Sigmoid colon (tissue), 7 donors: ENCODE measurements at regions of chr17 and their contacts with region 1.

Region 1: DNA sequence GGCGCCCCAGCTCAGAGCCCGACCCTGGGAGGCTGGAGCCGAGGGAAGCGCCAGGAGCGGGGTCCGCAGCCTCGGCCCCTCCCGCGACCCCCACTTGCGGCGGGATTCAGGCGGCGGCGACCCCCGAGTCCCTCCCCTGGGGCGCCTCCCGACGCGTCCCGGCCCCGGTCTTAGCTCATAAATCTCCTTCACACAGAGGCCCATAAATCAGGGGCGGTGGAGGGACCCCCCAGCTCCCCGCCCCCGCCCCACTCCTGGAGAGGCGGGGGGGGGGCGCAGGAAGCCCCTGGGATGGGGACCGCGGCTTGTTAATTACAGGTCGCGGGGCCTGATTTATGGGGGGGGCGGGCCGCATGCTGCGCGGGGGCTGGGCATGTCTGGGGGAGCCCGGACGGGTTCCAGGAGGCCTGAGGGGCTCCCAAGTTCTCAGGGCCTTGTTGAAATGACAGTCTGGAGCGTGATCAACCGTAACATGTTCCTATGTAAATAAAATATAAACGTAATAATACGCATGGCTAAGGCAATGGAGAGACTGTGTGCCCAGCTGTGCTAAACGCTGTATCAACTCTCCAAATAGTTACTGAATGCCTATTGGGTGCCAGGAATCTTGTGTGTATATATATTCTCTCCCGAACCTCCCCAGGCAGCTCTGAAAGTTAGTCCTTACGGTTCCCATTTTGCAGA is 10.0 kb upstream of the BHLHA9 start:
- DNase-seq: no peak
- H3K4me3 ChIP-seq: peak overlapping the region; percentile 38 to 59 (median 52)
- H3K27ac ChIP-seq: peak overlapping the region; percentile 66 to 84 (median 80)
- H3K4me1 ChIP-seq: peaks cover 0 to 15% (median 9%) of the 10 kb centered on the region in 4 donors
- H3K27me3 ChIP-seq: no peaks in the 10 kb centered on the region
- CTCF ChIP-seq: no peak
- EP300 ChIP-seq: no peak
- POLR2A ChIP-seq: no peak

Region 2: GRCh38 chr17:1229432-1229899 is 30.8 kb before region 1 on chr17:
- intact Hi-C with region 1: no loop called
- DNase-seq: peak; percentile 82
- H3K4me3 ChIP-seq: peak overlapping the region; percentile 26 to 59 (median 49)
- H3K27ac ChIP-seq: peak overlapping the region; percentile 38 to 62 (median 53)
- H3K4me1 ChIP-seq: peaks cover 0 to 26% (median 24%) of the 10 kb centered on the region in 4 donors
- H3K27me3 ChIP-seq: peaks cover 22 to 73% (median 58%) of the 10 kb centered on the region in 3 donors
- CTCF ChIP-seq: no peak
- EP300 ChIP-seq: no peak
- POLR2A ChIP-seq: peak in 1 of 2 donors; percentile 53

Region 3: GRCh38 chr17:1275962-1276736 is 15.9 kb after region 1 on chr17:
- intact Hi-C with region 1: loop called (anchors 1 kb)
- DNase-seq: peak; percentile 79
- H3K4me3 ChIP-seq: no peak overlapping the region
- H3K27ac ChIP-seq: no peak overlapping the region
- H3K4me1 ChIP-seq: peaks cover 0 to 6% (median 4%) of the 10 kb centered on the region in 4 donors
- H3K27me3 ChIP-seq: peaks cover 5 to 55% (median 8%) of the 10 kb centered on the region in 3 donors
- CTCF ChIP-seq: peak; percentile 63 to 84 (median 70)
- EP300 ChIP-seq: no peak
- POLR2A ChIP-seq: no peak

Region 4: DNA sequence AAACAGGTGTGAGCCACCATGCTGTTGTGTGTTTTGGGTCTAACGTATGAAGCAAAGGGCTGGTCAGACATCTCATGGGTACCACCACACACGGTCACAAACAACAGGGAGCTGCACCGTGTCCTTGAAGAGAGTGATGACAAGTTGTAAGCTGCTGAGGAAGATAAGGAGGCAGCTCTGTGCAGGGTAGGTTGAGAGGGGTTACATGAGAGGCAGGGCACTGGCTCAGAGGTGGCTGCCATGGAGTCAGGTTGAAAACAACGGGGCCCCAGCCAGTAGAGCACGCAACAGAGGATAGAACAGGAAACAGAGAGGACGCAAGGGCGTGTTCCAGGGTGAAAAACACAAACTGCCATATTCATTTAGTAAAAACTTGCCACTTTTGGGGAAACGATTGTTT is 71.5 kb after region 1 on chr17:
- intact Hi-C with region 1: loop called (anchors 1 kb)
- DNase-seq: no peak
- H3K4me3 ChIP-seq: no peak overlapping the region
- H3K27ac ChIP-seq: no peak overlapping the region
- H3K4me1 ChIP-seq: peaks cover 0 to 6% (median 2%) of the 10 kb centered on the region in 4 donors
- H3K27me3 ChIP-seq: no peaks in the 10 kb centered on the region
- CTCF ChIP-seq: no peak
- EP300 ChIP-seq: no peak
- POLR2A ChIP-seq: no peak

Region 5: GRCh38 chr17:2207815-2208515 is 947.7 kb after region 1 on chr17:
- intact Hi-C with region 1: no loop called
- DNase-seq: no peak
- H3K4me3 ChIP-seq: no peak overlapping the region
- H3K27ac ChIP-seq: peak overlapping the region; percentile 7 to 87 (median 43)
- H3K4me1 ChIP-seq: peaks cover 0 to 48% (median 37%) of the 10 kb centered on the region in 4 donors
- H3K27me3 ChIP-seq: no peaks in the 10 kb centered on the region
- CTCF ChIP-seq: no peak
- EP300 ChIP-seq: no peak
- POLR2A ChIP-seq: no peak